ENCODE measurements at regions of chr7 and their contacts with region 1.

Region 1: GRCh38 chr7:106779877-106780276 is 85.2 kb upstream of the PIK3CG start:
- DNase-seq: peak; percentile 78 to 88
- H3K4me3 ChIP-seq: no peak overlapping the region
- H3K27ac ChIP-seq: peak overlapping the region; percentile 70
- H3K4me1 ChIP-seq: peaks cover 34% of the 10 kb centered on the region
- H3K27me3 ChIP-seq: no peaks in the 10 kb centered on the region
- CTCF ChIP-seq: 0 out of 2 replicates have a peak, but pooled peaks have one; percentile 34

Region 2: GRCh38 chr7:105013221-105013815 is 1766.6 kb before region 1 on chr7:
- CTCF ChIA-PET with region 1: no interaction called
- POLR2A ChIA-PET with region 1: interaction called, 5 read pairs
- intact Hi-C with region 1: loop called (anchors 10 kb)
- DNase-seq: peak; percentile 74 to 92
- H3K4me3 ChIP-seq: peak overlapping the region; percentile 95
- H3K27ac ChIP-seq: peak overlapping the region; percentile 98
- H3K4me1 ChIP-seq: peaks cover 55% of the 10 kb centered on the region
- H3K27me3 ChIP-seq: no peaks in the 10 kb centered on the region
- CTCF ChIP-seq: peak; percentile 55; the same call in 1 of the 2 replicates

Region 3: DNA sequence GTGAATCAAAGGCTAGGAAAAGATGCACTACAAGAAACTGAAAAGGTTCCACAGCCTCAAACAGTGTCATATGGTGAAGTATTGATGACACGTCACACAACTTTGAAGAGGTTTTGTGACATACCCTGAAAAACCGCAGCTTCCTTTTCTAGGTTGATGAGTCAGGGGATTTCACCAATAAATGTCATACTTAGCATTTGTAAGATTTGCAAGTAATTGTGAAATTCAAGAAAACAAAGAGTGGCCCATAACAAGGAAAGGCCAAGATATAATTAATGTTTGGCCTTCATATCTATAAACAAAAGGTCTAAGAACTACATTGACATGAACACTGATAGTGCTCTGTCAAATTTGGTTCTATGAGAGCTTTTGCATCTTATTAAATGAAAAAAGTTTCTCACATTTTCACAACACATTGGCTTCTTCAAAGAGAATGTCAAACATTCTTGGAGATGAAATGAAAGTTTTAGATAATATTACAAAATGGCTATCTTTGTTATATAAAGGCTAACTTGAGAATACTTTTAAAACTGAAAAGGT is 433.1 kb before region 1 on chr7:
- CTCF ChIA-PET with region 1: no interaction called
- POLR2A ChIA-PET with region 1: no interaction called
- intact Hi-C with region 1: loop called (anchors 10 kb)
- DNase-seq: peak; percentile 24 to 96
- H3K4me3 ChIP-seq: peak overlapping the region; percentile 41; the same call in 1 of the 2 replicates
- H3K27ac ChIP-seq: peak overlapping the region; percentile 98
- H3K4me1 ChIP-seq: peaks cover 38% of the 10 kb centered on the region
- H3K27me3 ChIP-seq: no peaks in the 10 kb centered on the region
- CTCF ChIP-seq: no peak

Region 4: DNA sequence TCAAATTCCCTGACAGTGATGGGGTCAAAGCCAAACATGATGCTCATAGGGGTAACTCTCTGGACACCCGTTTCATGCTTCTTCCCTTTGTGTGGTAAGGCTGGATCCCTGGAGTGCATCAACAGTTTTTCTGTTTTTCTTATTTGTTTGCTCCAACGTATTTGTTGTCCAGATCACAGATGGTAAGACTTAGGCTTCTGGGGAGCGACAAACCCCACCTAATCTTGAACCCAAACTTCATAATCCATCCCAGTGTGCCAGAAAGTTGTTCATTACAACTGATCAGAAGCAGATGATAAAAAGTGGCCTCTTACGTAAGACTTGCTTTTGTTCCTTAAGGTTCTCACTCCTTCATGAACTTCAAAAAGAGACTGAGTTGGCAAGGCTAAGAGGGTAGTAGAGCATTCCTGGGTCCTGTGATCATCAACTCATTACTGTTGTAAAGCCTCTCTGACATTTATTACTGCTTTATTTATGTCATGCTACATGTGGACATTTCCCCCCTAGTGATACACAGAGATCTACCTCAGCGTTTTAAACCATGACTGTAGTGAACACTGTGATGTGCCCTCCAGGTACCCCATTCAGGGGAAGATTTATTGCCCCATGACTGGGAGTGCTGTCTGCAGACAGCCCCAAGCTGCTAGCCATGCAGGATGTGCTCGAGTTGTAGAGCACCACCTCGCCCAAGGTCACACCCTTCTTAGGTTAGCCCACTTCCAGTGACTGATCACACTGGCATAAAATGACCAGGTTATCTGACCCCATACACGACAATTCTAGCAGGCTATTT is 244.4 kb before region 1 on chr7:
- CTCF ChIA-PET with region 1: no interaction called
- POLR2A ChIA-PET with region 1: interaction called, 12 read pairs
- intact Hi-C with region 1: no loop called
- DNase-seq: no peak
- H3K4me3 ChIP-seq: no peak overlapping the region
- H3K27ac ChIP-seq: no peak overlapping the region
- H3K4me1 ChIP-seq: no peaks in the 10 kb centered on the region
- H3K27me3 ChIP-seq: no peaks in the 10 kb centered on the region
- CTCF ChIP-seq: no peak

Region 5: DNA sequence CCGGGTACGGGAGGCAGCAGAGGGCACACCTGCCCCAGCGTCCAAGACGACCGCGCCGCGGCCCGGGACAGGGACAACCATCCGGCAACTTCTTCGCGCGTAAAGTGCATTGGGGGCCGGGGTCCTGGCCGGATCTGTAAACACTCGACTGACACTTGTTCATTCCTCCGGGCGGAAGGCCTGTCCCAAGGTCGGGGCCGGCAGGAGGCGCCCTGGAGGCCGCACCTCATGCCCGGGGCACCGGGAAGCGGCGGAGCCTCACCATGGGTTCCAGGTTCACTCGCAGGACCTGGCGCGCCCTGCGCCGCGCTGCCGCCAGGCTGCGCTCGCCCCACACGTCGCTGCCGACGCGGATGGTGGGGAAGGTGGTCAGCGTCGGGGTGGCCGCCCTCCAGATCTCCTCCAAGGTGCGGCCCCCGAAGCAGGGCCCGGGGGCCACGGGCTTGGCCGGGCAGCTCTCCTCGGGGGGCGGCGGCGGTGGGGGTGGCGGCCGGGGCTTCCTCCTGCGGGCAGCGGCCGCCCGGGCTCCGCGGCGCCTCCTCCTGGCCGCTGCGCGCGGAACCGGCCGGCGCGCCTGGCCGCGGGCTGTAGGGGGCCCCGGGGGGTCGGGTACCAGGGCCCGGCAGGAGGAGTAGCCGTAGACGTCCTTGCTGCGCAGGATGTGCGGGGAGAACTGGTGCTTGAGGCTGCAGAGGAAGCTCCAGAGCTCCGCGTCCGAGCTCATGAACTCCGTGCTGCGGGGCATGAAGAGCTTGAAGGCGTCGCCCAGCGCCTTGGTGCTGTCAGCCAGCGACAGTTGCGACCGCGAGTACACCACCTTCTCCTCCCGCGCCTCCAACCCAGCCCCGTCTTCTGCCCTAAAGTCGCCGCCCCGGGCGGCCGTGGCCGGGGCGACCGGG is 119.7 kb before region 1 on chr7:
- CTCF ChIA-PET with region 1: interaction called, 5 read pairs
- POLR2A ChIA-PET with region 1: interaction called, 4 read pairs
- intact Hi-C with region 1: loop called (anchors 1 kb)
- DNase-seq: peak; percentile 54 to 86
- H3K4me3 ChIP-seq: peak overlapping the region; percentile 81
- H3K27ac ChIP-seq: peak overlapping the region; percentile 71
- H3K4me1 ChIP-seq: peaks cover 19% of the 10 kb centered on the region
- H3K27me3 ChIP-seq: no peaks in the 10 kb centered on the region
- CTCF ChIP-seq: peak; percentile 77

Region 6: DNA sequence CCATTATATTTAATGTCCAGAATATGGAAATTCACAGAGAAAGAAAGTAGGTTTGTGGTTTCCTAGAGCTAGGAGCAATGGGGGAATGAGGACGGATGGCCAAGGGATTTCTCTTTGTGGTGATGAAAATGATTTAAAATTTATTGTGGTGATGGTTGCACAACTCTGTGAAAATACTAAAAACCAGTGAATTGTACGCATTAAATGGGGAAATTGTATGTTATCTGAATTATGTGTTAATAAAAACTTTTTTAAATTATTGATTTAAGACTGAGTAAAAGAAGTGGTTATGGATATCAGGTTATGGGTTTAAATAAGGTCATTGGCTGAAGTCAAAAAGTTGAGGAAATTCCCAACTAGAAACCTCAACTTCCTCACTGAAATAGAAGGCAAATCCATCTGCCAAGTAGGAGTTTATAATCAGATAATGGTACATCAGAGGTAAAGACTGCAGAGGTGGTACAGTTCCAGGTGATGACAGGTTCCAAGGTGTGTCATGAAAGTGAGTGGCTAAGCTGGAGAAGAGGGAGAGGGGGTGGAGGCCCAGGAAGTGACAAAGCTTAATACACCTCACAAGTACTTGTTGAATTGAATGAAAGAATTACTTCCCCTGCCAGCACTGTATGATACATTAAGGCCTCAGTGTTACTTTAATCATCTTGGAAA is 50.0 kb before region 1 on chr7:
- CTCF ChIA-PET with region 1: no interaction called
- POLR2A ChIA-PET with region 1: no interaction called
- intact Hi-C with region 1: no loop called
- DNase-seq: peak in 1 of 2 experiments; percentile 10
- H3K4me3 ChIP-seq: no peak overlapping the region
- H3K27ac ChIP-seq: no peak overlapping the region
- H3K4me1 ChIP-seq: peaks cover 5% of the 10 kb centered on the region; the same call in 1 of the 2 replicates
- H3K27me3 ChIP-seq: no peaks in the 10 kb centered on the region
- CTCF ChIP-seq: no peak

Region 7: GRCh38 chr7:106752367-106752766 is 27.5 kb before region 1 on chr7:
- CTCF ChIA-PET with region 1: no interaction called
- POLR2A ChIA-PET with region 1: interaction called, 10 read pairs
- intact Hi-C with region 1: no loop called
- DNase-seq: peak in 1 of 2 experiments; percentile 49
- H3K4me3 ChIP-seq: no peak overlapping the region
- H3K27ac ChIP-seq: no peak overlapping the region
- H3K4me1 ChIP-seq: no peaks in the 10 kb centered on the region; the same call in 1 of the 2 replicates
- H3K27me3 ChIP-seq: no peaks in the 10 kb centered on the region
- CTCF ChIP-seq: no peak

Region 8: DNA sequence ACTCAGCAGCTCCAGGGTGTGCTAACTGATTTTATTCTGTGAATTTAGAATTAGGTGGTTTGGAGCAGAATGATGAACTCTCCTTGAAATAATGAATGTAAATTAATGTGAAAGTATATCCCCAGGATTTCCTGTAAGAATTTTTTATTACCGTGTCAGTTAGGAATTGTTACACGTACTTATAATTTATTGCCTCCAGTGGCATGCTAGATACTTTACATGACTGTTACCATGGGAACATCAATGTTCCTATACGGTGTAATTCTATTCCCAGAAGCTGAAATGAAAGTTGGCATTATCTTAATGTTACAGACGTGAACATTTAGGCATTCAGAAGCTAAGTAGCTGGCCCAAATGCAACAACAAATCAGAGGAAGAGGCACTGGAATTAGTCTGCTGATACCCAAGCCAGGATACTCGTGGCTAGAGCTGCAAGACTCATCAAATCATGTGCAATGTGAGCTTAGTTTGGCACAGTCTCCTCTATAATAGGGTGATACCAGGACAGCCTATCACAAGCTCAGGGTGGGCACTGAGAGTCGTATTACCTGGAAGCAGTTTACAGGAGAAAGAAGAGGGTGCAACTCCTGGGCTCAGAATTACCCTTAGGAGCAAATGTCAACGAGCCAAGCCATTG is 234.6 kb after region 1 on chr7:
- CTCF ChIA-PET with region 1: no interaction called
- POLR2A ChIA-PET with region 1: no interaction called
- intact Hi-C with region 1: no loop called
- DNase-seq: no peak
- H3K4me3 ChIP-seq: no peak overlapping the region
- H3K27ac ChIP-seq: no peak overlapping the region
- H3K4me1 ChIP-seq: no peaks in the 10 kb centered on the region
- H3K27me3 ChIP-seq: no peaks in the 10 kb centered on the region
- CTCF ChIP-seq: no peak

Region 9: DNA sequence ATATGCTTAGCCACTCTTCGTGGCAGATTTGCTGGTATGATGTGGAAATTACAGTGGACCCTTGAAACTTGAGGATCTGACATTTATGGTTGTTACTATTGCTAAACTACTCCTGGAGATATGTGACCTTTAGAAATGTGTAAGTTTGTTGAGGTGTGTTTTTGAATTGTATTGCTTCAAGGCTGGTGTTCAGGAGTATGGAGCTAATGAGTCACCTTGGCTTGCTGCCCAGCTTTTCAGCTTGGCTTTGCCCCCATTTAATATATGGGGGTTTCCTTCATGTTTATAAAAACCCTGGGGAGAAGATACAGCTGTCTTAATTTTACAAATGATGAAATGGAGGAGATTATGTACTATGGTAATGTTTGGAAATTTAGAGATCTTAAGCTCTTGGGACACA is 400.5 kb after region 1 on chr7:
- CTCF ChIA-PET with region 1: no interaction called
- POLR2A ChIA-PET with region 1: no interaction called
- intact Hi-C with region 1: no loop called
- DNase-seq: peak; percentile 35 to 57
- H3K4me3 ChIP-seq: no peak overlapping the region
- H3K27ac ChIP-seq: peak overlapping the region; percentile 64
- H3K4me1 ChIP-seq: peaks cover 20% of the 10 kb centered on the region
- H3K27me3 ChIP-seq: no peaks in the 10 kb centered on the region
- CTCF ChIP-seq: no peak

Region 10: DNA sequence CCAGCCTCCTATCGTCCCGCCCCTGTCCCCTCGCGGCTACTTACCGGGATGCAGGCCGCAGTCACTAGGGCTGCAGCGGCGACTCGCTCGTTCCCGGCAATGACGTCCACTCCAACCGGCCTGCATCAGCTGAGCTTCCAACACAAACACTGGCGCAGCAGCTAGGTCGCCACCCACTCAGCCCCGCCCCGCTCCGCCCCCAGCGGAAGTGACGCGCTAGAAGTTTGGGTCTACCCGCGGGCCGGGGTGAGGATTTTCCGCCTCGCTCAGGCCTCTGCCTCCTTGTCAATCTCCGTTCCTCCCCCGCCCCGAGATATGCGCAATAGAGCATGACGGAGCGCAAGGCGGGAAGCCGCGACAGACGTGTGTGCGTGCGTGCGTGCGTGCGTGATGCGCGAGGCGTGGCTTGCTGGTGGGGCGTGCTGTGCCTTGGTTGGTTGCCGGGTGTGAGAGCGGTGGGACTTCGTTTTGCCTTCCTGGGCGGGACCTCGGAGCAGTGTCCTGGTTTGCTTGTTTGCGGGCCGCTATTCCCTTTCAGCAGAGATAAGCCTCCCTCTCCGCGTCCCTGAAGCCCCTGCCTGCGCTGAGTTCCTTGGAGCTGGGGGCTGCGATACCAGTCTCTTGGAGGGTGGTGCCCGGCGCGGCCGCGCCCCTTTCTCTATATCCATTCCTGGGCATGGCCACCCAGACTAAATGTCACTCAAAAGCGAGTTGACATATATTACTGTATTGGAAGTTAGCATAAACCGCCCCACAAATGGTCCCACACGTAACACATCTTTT is 1746.3 kb after region 1 on chr7 and contains the start of gene PNPLA8:
- CTCF ChIA-PET with region 1: no interaction called
- POLR2A ChIA-PET with region 1: no interaction called
- intact Hi-C with region 1: loop called (anchors 10 kb)
- DNase-seq: peak; percentile 98 to 100
- H3K4me3 ChIP-seq: peak within 1 kb of the TSS; percentile 68
- H3K27ac ChIP-seq: peak within 1 kb of the TSS; percentile 96
- H3K4me1 ChIP-seq: peaks cover 56% of the 10 kb centered on the region
- H3K27me3 ChIP-seq: no peaks in the 10 kb centered on the region
- CTCF ChIP-seq: no peak
- total RNA-seq, gene PNPLA8: 15.6 and 31.3 TPM in 2 replicates